ENCODE measurements at regions of chr7 and their contacts with region 1.

Region 1: GRCh38 chr7:44490351-44491200 is at the start of gene NUDCD3:
- DNase-seq: peak; percentile 84
- H3K4me3 Mint-ChIP-seq: peak within 1 kb of the TSS; percentile 80
- H3K27ac Mint-ChIP-seq: peak within 1 kb of the TSS; percentile 88
- H3K4me1 Mint-ChIP-seq: peaks cover 37% of the 10 kb centered on the region
- H3K27me3 Mint-ChIP-seq: no peaks in the 10 kb centered on the region
- CTCF ChIP-seq: no peak
- total RNA-seq, gene NUDCD3: 85.5 and 87.7 TPM in 2 replicates

Region 2: DNA sequence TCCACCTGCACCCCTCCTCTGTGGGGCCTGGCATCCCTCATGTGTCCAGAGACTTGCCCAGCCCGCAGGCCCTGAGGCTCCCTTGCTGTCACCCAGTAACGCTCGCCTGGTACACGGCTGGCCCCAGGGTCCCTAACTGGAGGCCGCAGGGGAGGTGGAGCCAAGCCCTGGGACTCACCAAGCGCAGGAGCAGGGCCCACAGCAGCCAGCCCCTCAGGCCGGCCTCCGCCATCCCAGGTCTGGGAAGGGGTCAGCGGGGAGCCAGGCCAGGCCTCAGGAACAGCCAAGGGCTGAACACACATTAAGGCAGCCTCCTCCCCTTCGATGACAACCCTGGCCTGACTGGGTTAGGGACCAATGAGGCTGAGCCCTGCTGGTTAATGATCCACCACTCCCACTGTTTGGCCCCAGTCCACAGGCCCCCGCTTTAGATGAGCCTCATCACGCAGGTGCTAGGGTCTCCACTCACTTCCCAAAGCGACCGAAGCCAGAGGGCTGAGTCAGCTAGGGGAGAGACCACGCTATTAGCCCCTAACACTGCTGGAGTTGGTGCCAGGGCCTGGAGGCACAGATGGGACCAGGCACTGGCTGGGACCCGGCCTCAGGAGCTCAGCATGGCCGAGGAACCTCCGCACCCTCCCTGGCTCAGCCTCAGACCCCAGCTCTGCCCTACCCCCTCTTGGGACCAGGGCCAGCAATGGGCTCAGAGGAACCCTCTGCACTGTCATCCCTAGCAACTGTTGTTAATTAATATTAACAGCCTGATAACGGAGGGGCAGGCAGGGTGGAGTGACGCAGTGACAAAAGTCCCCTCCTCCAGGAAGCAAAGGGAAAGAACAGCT is 50.7 kb after region 1 on chr7 and contains the start of gene NPC1L1:
- CTCF ChIA-PET with region 1: interaction called, 3 read pairs
- POLR2A ChIA-PET with region 1: interaction called, 60 read pairs
- intact Hi-C with region 1: loop called (anchors 10 kb)
- DNase-seq: no peak
- H3K4me3 Mint-ChIP-seq: no peak within 1 kb of the TSS
- H3K27ac Mint-ChIP-seq: peak within 1 kb of the TSS; percentile 19
- H3K4me1 Mint-ChIP-seq: peaks cover 17% of the 10 kb centered on the region
- H3K27me3 Mint-ChIP-seq: no peaks in the 10 kb centered on the region
- CTCF ChIP-seq: no peak
- total RNA-seq, gene NPC1L1: 0.07 TPM in 1 of 2 replicates, not detected in the other

Region 3: DNA sequence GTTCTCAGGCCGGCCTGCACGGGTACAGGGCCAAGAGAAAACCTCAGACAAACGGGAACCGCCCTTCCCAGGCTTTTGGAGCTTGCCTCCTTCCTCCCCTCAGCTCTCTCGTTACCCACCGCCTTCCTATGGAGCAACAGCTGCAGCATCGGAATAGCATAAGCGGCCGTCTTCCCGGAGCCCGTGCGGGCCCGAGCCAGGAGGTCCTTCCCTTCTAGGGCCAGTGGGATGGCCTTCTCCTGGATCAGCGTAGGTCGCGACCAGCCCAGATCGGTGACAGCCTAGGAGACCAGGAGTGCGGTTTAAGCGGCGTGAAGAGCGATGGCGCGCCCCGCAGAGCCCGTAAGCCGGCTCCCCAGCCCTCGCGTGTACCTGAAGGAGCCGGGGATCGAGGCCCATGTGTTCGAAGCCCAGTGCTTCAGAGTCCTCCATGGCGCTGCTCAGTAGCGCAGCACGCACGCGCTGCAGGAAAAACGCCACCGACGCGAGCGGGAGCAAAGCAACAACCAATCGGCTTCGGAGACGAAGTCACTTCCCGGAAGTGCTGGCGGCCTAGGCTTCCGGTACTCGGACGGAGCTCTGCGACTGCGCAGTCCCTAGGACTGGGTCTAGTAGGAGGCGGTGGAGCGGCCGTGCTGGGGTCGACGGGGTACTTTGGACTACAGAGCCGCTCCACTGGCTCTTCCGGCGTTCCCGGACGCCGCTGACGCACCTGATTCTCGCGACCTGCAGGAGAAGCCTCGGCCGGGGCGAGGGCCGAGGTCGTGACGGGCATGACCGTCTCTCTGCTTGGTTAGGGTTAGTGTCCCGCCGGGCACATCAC is 83.1 kb after region 1 on chr7 and contains the start of gene DDX56:
- CTCF ChIA-PET with region 1: interaction called, 5 read pairs
- POLR2A ChIA-PET with region 1: interaction called, 69 read pairs
- intact Hi-C with region 1: no loop called
- DNase-seq: peak; percentile 94
- H3K4me3 Mint-ChIP-seq: peak within 1 kb of the TSS; percentile 98
- H3K27ac Mint-ChIP-seq: peak within 1 kb of the TSS; percentile 95
- H3K4me1 Mint-ChIP-seq: peaks cover 21% of the 10 kb centered on the region
- H3K27me3 Mint-ChIP-seq: no peaks in the 10 kb centered on the region
- CTCF ChIP-seq: no peak
- total RNA-seq, gene DDX56: 104 and 105 TPM in 2 replicates

Region 4: DNA sequence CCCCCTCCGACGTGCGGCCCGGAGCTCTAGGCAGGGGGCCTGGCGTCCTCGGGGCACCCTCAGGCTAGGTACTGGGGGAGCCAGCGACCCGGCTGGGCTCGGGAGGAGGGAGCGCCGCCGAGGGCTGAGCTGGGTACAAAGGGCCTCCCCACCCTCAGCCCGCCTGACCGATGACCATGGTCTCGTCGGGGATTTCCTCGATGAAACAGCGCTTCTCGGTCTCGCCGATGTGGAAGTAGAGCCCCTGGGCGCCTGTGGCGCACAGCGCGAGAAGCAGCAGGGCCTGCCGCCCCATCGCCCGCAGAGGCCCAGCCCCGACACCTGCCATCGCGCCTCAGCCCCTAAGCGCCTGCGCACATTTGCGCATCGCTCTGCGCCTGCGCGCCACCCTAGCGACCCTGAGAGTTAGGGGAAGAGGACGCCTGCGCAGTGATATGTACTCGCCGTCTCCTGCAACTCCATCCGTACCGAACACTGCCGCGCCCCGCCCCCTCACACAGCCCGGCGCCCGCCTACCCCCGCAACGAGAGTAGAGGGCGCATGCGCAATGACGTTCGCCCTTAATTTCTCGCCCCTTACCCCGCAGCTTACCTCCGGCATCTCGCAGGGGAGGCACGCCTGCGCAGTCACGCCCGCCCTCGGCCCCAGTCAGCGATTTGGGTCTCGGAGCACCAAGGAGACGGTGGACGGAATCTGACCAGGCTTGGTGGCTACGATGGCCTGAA is 91.5 kb after region 1 on chr7 and contains the start of gene TMED4:
- CTCF ChIA-PET with region 1: interaction called, 6 read pairs
- POLR2A ChIA-PET with region 1: interaction called, 29 read pairs
- intact Hi-C with region 1: no loop called
- DNase-seq: peak; percentile 99
- H3K4me3 Mint-ChIP-seq: peak within 1 kb of the TSS; percentile 85
- H3K27ac Mint-ChIP-seq: peak within 1 kb of the TSS; percentile 93
- H3K4me1 Mint-ChIP-seq: peaks cover 6% of the 10 kb centered on the region
- H3K27me3 Mint-ChIP-seq: no peaks in the 10 kb centered on the region
- CTCF ChIP-seq: no peak
- total RNA-seq, gene TMED4: 49.7 and 58.0 TPM in 2 replicates